OCI-LY7 (cell line): ENCODE measurements at regions of chr7 and their contacts with region 1.

Region 1: DNA sequence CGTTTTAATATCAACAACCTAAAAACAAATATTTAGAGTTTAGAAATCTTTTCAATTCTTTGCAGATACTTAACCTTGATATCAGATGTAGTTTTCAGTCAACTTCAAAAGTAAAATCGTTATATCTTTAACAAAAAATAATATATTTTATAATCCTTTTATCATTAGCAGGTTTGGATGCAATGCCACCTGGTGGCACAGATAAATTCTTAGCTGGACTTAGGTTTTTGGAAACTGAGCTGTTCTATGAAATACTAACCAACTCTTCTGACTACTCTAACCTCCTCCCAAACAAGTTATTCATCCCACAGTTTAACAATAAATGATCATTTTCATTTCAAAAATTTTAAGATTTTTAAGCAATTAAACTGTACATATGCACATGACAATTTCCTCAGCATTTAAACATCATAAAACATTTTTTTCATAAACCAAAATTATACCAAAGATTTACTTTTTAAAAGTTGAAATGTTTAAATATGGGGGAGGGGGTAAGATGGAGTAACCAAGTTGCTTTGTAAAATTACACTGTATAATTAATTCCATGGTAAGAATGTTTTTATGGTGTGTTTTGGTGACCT is 56.9 kb downstream of the HIBADH start:
- DNase-seq: peak; percentile 28
- H3K4me3 ChIP-seq: peak overlapping the region; percentile 9
- H3K27ac ChIP-seq: no peak overlapping the region
- H3K4me1 ChIP-seq: no peaks in the 10 kb centered on the region
- CTCF ChIP-seq: peak; percentile 86

Region 2: GRCh38 chr7:27593226-27593625 is 12.6 kb before region 1 on chr7:
- CTCF ChIA-PET with region 1: no interaction called
- POLR2A ChIA-PET with region 1: interaction called, 11 read pairs
- intact Hi-C with region 1: no loop called
- DNase-seq: no peak
- H3K4me3 ChIP-seq: no peak overlapping the region
- H3K27ac ChIP-seq: no peak overlapping the region
- H3K4me1 ChIP-seq: no peaks in the 10 kb centered on the region
- CTCF ChIP-seq: no peak